Activated CD4-positive, alpha-beta memory T cell treated with anti-CD3 and anti-CD28 coated beads for 36 hours (primary cell): ENCODE measurements at regions of chr7 and their contacts with region 1.

Region 1: GRCh38 chr7:5665094-5666025 is 116.1 kb downstream of the RNF216 start:
- DNase-seq: peak; percentile 73
- H3K4me3 Mint-ChIP-seq: no peak overlapping the region
- H3K27ac Mint-ChIP-seq: peak overlapping the region; percentile 49
- H3K4me1 Mint-ChIP-seq: peaks cover 17% of the 10 kb centered on the region
- H3K27me3 Mint-ChIP-seq: no peaks in the 10 kb centered on the region

Region 2: GRCh38 chr7:5636914-5637313 is 28.4 kb before region 1 on chr7:
- CTCF ChIA-PET with region 1: interaction called, 18 read pairs
- POLR2A ChIA-PET with region 1: no interaction called
- intact Hi-C with region 1: loop called (anchors 5 kb)
- DNase-seq: no peak
- H3K4me3 Mint-ChIP-seq: no peak overlapping the region
- H3K27ac Mint-ChIP-seq: no peak overlapping the region
- H3K4me1 Mint-ChIP-seq: peaks cover 15% of the 10 kb centered on the region
- H3K27me3 Mint-ChIP-seq: no peaks in the 10 kb centered on the region

Region 3: DNA sequence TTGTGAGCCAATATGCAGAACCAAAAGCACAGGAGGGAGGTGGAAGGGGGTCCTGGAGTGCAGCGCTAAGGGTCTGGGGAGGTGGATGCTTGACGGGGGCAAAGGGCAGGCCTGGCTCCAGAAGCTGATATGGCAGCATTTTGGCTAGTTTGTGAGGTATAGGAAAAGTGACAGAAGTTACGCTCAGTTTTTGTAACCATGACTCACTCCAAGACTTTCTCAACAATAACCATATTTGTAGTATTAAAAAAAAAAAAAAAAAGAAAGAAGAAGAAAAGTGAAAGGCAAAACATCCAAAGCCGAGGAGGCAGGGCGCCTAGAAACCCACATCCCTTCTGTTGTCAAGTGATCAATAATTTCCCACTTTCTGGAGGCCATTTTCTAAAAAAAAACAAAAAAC is 23.8 kb after region 1 on chr7:
- CTCF ChIA-PET with region 1: interaction called, 31 read pairs
- POLR2A ChIA-PET with region 1: no interaction called
- intact Hi-C with region 1: no loop called
- DNase-seq: peak; percentile 78
- H3K4me3 Mint-ChIP-seq: peak overlapping the region; percentile 3
- H3K27ac Mint-ChIP-seq: peak overlapping the region; percentile 76
- H3K4me1 Mint-ChIP-seq: peaks cover 86% of the 10 kb centered on the region
- H3K27me3 Mint-ChIP-seq: no peaks in the 10 kb centered on the region

Region 4: GRCh38 chr7:5704534-5704922 is 39.2 kb after region 1 on chr7:
- CTCF ChIA-PET with region 1: interaction called, 48 read pairs
- POLR2A ChIA-PET with region 1: no interaction called
- intact Hi-C with region 1: loop called (anchors 1 kb)
- DNase-seq: peak; percentile 85
- H3K4me3 Mint-ChIP-seq: no peak overlapping the region
- H3K27ac Mint-ChIP-seq: no peak overlapping the region
- H3K4me1 Mint-ChIP-seq: peaks cover 73% of the 10 kb centered on the region
- H3K27me3 Mint-ChIP-seq: no peaks in the 10 kb centered on the region